Heart right ventricle (tissue), 16 donors: ENCODE measurements at regions of chr12 and their contacts with region 1.

Region 1: GRCh38 chr12:53251477-53252348 is 16.4 kb upstream of the ESPL1 start:
- DNase-seq: peak; percentile 72 to 83
- ATAC-seq: peak; percentile 91 to 95 (median 93)
- H3K4me3 ChIP-seq: peak overlapping the region; percentile 70 to 99 (median 85)
- H3K27ac ChIP-seq: peak overlapping the region; percentile 65 to 97 (median 94)
- H3K4me1 ChIP-seq: peaks cover 16 to 32% (median 25%) of the 10 kb centered on the region in 9 donors
- H3K27me3 ChIP-seq: no peaks in the 10 kb centered on the region
- CTCF ChIP-seq: peak in 7 of 9 donors; percentile 24 to 57 (median 34)

Region 2: GRCh38 chr12:53213348-53213747 is 38.4 kb before region 1 on chr12:
- intact Hi-C with region 1: loop called in 8 of 10 experiments (anchors 1 to 5 kb)
- DNase-seq: peak; percentile 84 to 89
- ATAC-seq: peak; percentile 72 to 86 (median 80)
- H3K4me3 ChIP-seq: peak overlapping the region in 7 of 10 donors; percentile 10 to 46 (median 41)
- H3K27ac ChIP-seq: peak overlapping the region in 8 of 10 donors; percentile 78 to 100 (median 98)
- H3K4me1 ChIP-seq: peaks cover 13 to 74% (median 63%) of the 10 kb centered on the region in 9 donors
- H3K27me3 ChIP-seq: no peaks in the 10 kb centered on the region
- CTCF ChIP-seq: peak; percentile 93 to 98 (median 95)

Region 3: GRCh38 chr12:53220801-53221202 is 30.9 kb before region 1 on chr12:
- intact Hi-C with region 1: loop called in 4 of 10 experiments (anchors 1 to 2 kb)
- DNase-seq: peak; percentile 93 to 94
- ATAC-seq: peak; percentile 87 to 93 (median 90)
- H3K4me3 ChIP-seq: peak overlapping the region; percentile 71 to 96 (median 76)
- H3K27ac ChIP-seq: peak overlapping the region; percentile 96 to 100 (median 99)
- H3K4me1 ChIP-seq: peaks cover 9 to 83% (median 60%) of the 10 kb centered on the region in 9 donors
- H3K27me3 ChIP-seq: no peaks in the 10 kb centered on the region
- CTCF ChIP-seq: no peak

Region 4: GRCh38 chr12:53352331-53353256 is 100.9 kb after region 1 on chr12:
- intact Hi-C with region 1: no loop called
- DNase-seq: peak; percentile 64 to 87
- ATAC-seq: peak; percentile 94 to 98 (median 97)
- H3K4me3 ChIP-seq: no peak overlapping the region
- H3K27ac ChIP-seq: no peak overlapping the region
- H3K4me1 ChIP-seq: peaks cover 0 to 11% (median 0%) of the 10 kb centered on the region in 9 donors
- H3K27me3 ChIP-seq: no peaks in the 10 kb centered on the region
- CTCF ChIP-seq: peak; percentile 83 to 95 (median 90)

Region 5: GRCh38 chr12:53427905-53428594 is 176.3 kb after region 1 on chr12:
- intact Hi-C with region 1: no loop called
- DNase-seq: no peak
- ATAC-seq: no peak
- H3K4me3 ChIP-seq: no peak overlapping the region
- H3K27ac ChIP-seq: no peak overlapping the region
- H3K4me1 ChIP-seq: no peaks in the 10 kb centered on the region
- H3K27me3 ChIP-seq: no peaks in the 10 kb centered on the region
- CTCF ChIP-seq: no peak